GM12878 (cell line): ENCODE measurements at regions of chr1 and their contacts with region 1.

Region 1: DNA sequence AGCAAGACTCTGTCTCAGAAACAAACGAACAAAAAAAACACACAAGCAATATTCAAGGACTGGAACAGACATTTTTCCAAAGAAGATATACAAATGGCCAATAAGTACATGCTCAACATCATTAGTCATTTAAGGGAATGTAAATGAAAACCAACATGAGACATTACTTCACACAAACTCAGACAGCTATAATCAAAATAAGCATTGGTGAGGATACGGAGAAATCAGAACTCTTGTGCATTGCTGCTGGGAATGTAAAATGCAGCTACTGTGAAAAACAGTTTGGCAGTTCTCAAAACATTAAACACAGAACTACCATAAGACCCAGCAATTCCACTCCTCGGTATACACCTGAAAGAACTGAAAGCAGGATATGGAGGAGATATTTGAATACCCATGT is 15.4 kb downstream of the NOL9 start:
- DNase-seq: no peak
- ATAC-seq: no peak
- H3K4me3 ChIP-seq: no peak overlapping the region
- H3K27ac ChIP-seq: no peak overlapping the region
- H3K4me1 ChIP-seq: no peaks in the 10 kb centered on the region
- H3K27me3 ChIP-seq: no peaks in the 10 kb centered on the region
- CTCF ChIP-seq: no peak
- EP300 ChIP-seq: no peak
- POLR2A ChIP-seq: no peak
- RAD21 ChIP-seq: no peak

Region 2: GRCh38 chr1:6523566-6523965 is 15.4 kb before region 1 on chr1:
- CTCF ChIA-PET with region 1: interaction called, 10 read pairs
- POLR2A ChIA-PET with region 1: no interaction called
- RAD21 ChIA-PET with region 1: no interaction called
- SMC1A ChIA-PET with region 1: no interaction called
- in situ Hi-C with region 1: no loop called
- intact Hi-C with region 1: no loop called
- DNase-seq: no peak
- ATAC-seq: peak; percentile 71
- H3K4me3 ChIP-seq: no peak overlapping the region
- H3K27ac ChIP-seq: no peak overlapping the region
- H3K4me1 ChIP-seq: no peaks in the 10 kb centered on the region
- H3K27me3 ChIP-seq: no peaks in the 10 kb centered on the region
- CTCF ChIP-seq: peak; percentile 31 to 47 (median 35); a peak in 4 of 6 replicates
- EP300 ChIP-seq: no peak
- POLR2A ChIP-seq: no peak
- RAD21 ChIP-seq: 0 out of 2 replicates have a peak, but pooled peaks have one; percentile 23

Region 3: GRCh38 chr1:6646499-6647148 is 107.7 kb after region 1 on chr1:
- CTCF ChIA-PET with region 1: no interaction called
- POLR2A ChIA-PET with region 1: interaction called, 12 read pairs
- RAD21 ChIA-PET with region 1: no interaction called
- SMC1A ChIA-PET with region 1: no interaction called
- in situ Hi-C with region 1: no loop called
- intact Hi-C with region 1: no loop called
- DNase-seq: no peak
- ATAC-seq: peak; percentile 61
- H3K4me3 ChIP-seq: no peak overlapping the region
- H3K27ac ChIP-seq: no peak overlapping the region
- H3K4me1 ChIP-seq: no peaks in the 10 kb centered on the region
- H3K27me3 ChIP-seq: no peaks in the 10 kb centered on the region
- CTCF ChIP-seq: peak; percentile 50 to 72 (median 54)
- EP300 ChIP-seq: no peak
- POLR2A ChIP-seq: no peak
- RAD21 ChIP-seq: peak; percentile 75